PC-9 (cell line): ENCODE measurements at regions of chr16 and their contacts with region 1.

Region 1: GRCh38 chr16:4882633-4883285 is 35.5 kb downstream of the UBN1 start:
- DNase-seq: peak; percentile 93
- H3K4me3 ChIP-seq: no peak overlapping the region
- H3K27ac ChIP-seq: peak overlapping the region; percentile 53
- H3K4me1 ChIP-seq: peaks cover 27% of the 10 kb centered on the region
- H3K27me3 ChIP-seq: no peaks in the 10 kb centered on the region
- CTCF ChIP-seq: no peak

Region 2: GRCh38 chr16:4693296-4693955 is 189.3 kb before region 1 on chr16 and contains the start of gene NUDT16L1:
- CTCF ChIA-PET with region 1: no interaction called
- POLR2A ChIA-PET with region 1: no interaction called
- intact Hi-C with region 1: no loop called
- DNase-seq: peak; percentile 84 to 99
- H3K4me3 ChIP-seq: peak within 1 kb of the TSS; percentile 90
- H3K27ac ChIP-seq: 0 out of 2 replicates have a peak within 1 kb of the TSS, but pooled peaks have one; percentile 16
- H3K4me1 ChIP-seq: peaks cover 10% of the 10 kb centered on the region; the same call in 1 of the 2 replicates
- H3K27me3 ChIP-seq: no peaks in the 10 kb centered on the region
- CTCF ChIP-seq: no peak; the same call in 1 of the 2 replicates
- total RNA-seq, gene NUDT16L1: 25.7 and 37.5 TPM in 2 replicates

Region 3: GRCh38 chr16:4820652-4821051 is 62.1 kb before region 1 on chr16:
- CTCF ChIA-PET with region 1: no interaction called
- POLR2A ChIA-PET with region 1: no interaction called
- intact Hi-C with region 1: no loop called
- DNase-seq: no peak
- H3K4me3 ChIP-seq: no peak overlapping the region
- H3K27ac ChIP-seq: no peak overlapping the region
- H3K4me1 ChIP-seq: no peaks in the 10 kb centered on the region
- H3K27me3 ChIP-seq: no peaks in the 10 kb centered on the region
- CTCF ChIP-seq: no peak

Region 4: DNA sequence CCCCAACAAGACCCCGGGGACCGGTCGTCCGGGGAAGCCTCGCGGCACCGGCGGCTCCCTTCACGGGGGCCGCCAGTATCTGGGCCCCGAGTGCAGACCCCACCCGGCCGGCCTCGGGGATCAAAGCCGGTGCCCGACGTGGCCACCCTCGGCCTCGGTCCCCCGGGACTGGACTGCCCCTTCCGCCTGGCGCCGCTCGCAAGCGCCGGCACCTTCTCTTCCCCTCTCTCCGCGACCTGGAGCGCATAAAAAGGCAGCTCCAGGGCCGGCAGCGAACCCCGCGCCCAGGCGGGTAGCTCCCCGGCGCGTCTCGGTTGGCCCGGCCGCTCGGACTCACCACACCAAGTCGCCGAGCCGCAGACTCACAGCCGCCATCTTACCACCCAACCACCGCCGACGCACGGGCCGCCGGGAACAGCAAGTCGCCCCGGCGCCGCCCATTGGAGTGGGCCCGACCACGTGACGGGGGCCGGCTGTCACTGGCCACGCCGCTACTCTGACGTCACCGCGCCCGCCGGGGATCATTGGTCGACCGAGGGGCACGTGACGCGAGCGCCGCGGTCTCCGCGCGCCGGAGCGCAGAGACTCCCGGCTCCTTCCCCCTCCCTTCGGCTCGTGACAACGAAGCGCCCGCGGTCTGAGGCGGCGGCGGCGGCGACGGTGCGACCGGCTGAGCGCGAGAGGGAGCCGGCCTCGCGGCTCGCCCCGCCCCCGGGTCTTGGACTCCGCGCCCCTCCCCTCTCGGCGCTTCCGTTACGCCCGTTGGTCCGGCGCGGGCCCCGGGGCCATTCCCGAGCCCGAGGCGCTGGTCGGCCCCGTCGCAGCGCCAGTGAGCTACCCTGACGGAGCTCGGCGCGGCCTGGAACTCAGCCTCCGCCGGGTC is 35.6 kb before region 1 on chr16 and contains the starts of genes GLYR1 and UBN1:
- CTCF ChIA-PET with region 1: no interaction called
- POLR2A ChIA-PET with region 1: no interaction called
- intact Hi-C with region 1: loop called (anchors 2 kb)
- DNase-seq: peak; percentile 89 to 100
- H3K4me3 ChIP-seq: peak within 1 kb of the TSS; percentile 94
- H3K27ac ChIP-seq: 0 out of 2 replicates have a peak within 1 kb of the TSS, but pooled peaks have one; percentile 16
- H3K4me1 ChIP-seq: peaks cover 47% of the 10 kb centered on the region
- H3K27me3 ChIP-seq: no peaks in the 10 kb centered on the region
- CTCF ChIP-seq: no peak
- total RNA-seq, gene GLYR1: 97.5 and 135 TPM in 2 replicates
- total RNA-seq, gene UBN1: 42.7 and 44.1 TPM in 2 replicates

Region 5: GRCh38 chr16:4869147-4869805 is 13.5 kb before region 1 on chr16:
- CTCF ChIA-PET with region 1: no interaction called
- POLR2A ChIA-PET with region 1: no interaction called
- intact Hi-C with region 1: no loop called
- DNase-seq: no peak
- H3K4me3 ChIP-seq: no peak overlapping the region
- H3K27ac ChIP-seq: no peak overlapping the region
- H3K4me1 ChIP-seq: no peaks in the 10 kb centered on the region
- H3K27me3 ChIP-seq: no peaks in the 10 kb centered on the region
- CTCF ChIP-seq: no peak

Region 6: GRCh38 chr16:4915226-4915761 is 32.5 kb after region 1 on chr16:
- CTCF ChIA-PET with region 1: no interaction called
- POLR2A ChIA-PET with region 1: no interaction called
- intact Hi-C with region 1: loop called (anchors 2 kb)
- DNase-seq: peak; percentile 76 to 95
- H3K4me3 ChIP-seq: no peak overlapping the region
- H3K27ac ChIP-seq: peak overlapping the region; percentile 89
- H3K4me1 ChIP-seq: peaks cover 76% of the 10 kb centered on the region
- H3K27me3 ChIP-seq: no peaks in the 10 kb centered on the region
- CTCF ChIP-seq: no peak

Region 7: DNA sequence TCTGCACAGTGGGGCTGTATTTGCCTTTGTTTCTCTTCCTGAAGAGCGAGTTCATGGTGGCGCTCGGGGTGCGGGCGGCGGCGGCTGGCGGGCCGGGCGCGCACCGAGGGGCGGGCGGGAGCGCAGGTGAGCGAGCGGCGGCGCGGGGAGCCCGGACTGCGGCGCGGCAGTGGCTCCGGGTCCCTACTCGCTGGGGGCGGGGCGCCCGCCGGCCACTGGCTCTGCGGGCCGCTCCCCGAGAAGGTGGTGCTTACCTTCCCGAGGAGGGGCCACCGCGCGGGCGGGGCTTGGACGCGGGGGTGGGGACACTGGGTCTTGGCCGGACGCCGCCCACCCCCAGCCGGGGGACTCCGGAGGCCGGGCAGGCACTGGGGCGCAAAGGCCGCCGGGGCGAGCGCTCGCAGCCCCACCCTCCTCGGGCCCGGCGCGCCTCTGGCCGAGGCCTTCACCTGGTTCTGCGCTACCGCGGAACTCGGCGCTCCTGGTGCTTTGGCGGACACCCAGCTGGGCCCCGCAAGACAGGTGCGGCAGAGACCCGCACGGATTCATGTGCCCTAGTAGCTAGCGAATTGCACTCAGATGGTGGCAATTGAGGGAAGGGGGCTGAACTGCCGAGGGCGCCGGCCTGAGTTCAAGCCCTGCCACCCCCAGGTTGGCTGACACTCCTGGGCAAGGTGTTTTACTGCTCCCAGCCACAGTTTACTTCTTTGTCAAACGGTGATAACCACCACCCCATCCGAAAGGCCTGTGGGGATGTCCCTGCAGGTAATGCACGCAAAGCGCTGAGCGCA is 54.4 kb after region 1 on chr16 and contains the start of gene PPL:
- CTCF ChIA-PET with region 1: no interaction called
- POLR2A ChIA-PET with region 1: no interaction called
- intact Hi-C with region 1: loop called (anchors 2 kb)
- DNase-seq: peak; percentile 87 to 100
- H3K4me3 ChIP-seq: peak within 1 kb of the TSS; percentile 99
- H3K27ac ChIP-seq: peak within 1 kb of the TSS; percentile 38; the same call in 1 of the 2 replicates
- H3K4me1 ChIP-seq: peaks cover 36% of the 10 kb centered on the region
- H3K27me3 ChIP-seq: no peaks in the 10 kb centered on the region
- CTCF ChIP-seq: no peak
- total RNA-seq, gene PPL: 184 and 187 TPM in 2 replicates

Region 8: GRCh38 chr16:4987580-4988374 is 105.0 kb after region 1 on chr16:
- CTCF ChIA-PET with region 1: no interaction called
- POLR2A ChIA-PET with region 1: no interaction called
- intact Hi-C with region 1: no loop called
- DNase-seq: no peak
- H3K4me3 ChIP-seq: no peak overlapping the region
- H3K27ac ChIP-seq: no peak overlapping the region
- H3K4me1 ChIP-seq: no peaks in the 10 kb centered on the region
- H3K27me3 ChIP-seq: peaks cover 48% of the 10 kb centered on the region
- CTCF ChIP-seq: no peak